Right ventricle myocardium inferior (tissue), 1 donor: ENCODE measurements at regions of chr22 and their contacts with region 1.

Region 1: GRCh38 chr22:40487663-40488249 is 117.4 kb downstream of the SGSM3 start:
- DNase-seq: no peak
- ATAC-seq: no peak

Region 2: DNA sequence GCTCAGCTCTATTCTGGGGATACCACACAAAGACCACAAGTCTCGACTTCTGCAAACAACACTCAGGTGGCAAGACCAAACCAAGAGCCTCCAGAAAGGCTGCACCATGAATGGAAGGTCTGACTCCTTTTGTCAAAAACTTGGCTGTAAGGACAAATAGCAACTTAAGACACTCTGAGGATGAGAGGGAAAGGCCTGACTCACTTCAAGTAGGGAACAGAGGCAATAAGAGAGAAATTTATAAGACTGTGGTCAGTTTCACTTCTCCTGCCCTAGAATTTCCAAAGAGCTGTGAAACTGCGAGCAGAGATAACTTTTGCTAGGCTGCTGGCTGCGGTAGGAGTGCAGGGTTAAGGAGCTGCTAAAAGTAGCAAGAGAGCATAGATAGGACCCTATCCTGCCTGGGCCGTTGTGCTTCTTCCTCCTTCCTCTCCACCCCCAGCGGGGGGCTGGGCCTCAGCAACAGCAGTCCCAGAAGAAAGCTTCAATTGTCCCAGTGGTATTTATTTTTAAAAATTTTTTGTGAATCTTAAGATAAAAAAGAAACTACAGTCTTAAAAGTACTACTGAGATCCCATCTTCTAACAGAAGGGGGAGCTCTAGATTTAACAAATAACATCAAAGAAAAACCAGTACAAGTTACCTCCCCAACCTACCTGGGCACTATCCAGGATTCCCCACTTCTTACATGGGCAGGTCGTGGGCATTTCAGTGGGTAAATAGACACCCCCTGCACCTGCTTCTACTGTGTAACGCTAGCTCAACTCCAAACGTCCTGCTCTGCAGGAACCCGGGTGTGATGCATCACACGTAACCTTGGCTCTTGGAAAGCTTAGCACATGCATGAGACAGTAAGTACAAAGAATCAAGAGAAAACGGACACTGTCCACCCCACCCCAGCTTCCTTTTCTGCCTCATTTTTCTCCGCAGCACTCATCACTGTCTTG is 51.0 kb before region 1 on chr22:
- intact Hi-C with region 1: loop called (anchors 10 kb)
- DNase-seq: no peak
- ATAC-seq: peak; percentile 73

Region 3: DNA sequence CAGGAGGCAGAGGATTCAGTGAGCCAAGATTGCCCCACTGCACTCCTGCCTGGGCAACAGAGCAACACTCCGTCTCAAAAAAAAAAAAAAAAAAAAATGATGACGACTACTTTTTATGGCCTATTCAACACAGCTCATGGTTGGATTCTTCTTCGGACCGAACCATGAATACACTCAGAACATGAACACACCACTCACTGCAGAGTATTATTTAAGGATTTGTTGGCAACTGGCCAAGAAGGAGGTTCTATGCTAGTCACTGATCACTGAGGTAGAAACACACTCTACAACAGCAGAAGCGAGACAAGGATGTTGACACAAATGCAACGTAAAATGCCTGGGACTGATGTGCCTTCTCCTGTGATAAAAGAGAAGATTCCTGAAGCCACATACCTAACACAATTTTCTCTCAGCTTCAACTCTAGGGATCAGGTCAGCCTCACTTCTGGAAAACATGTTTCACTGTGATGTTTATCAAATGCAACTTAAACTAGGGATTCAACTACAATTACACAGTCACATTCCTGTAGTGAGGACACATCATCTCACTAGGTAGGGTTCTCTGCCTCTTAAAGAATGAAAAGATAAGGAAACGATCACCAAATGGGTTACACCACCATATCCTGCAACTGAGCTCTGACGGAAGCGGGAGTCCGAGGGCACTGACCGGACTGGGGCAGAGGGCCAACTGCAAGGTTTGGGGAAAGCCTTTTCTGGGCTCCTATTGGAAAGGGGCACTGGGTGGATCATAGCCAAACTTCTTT is 34.8 kb before region 1 on chr22:
- intact Hi-C with region 1: loop called (anchors 2 kb)
- DNase-seq: no peak
- ATAC-seq: no peak

Region 4: GRCh38 chr22:40525249-40525884 is 37.6 kb after region 1 on chr22:
- intact Hi-C with region 1: no loop called
- DNase-seq: peak; percentile 69
- ATAC-seq: no peak

Region 5: DNA sequence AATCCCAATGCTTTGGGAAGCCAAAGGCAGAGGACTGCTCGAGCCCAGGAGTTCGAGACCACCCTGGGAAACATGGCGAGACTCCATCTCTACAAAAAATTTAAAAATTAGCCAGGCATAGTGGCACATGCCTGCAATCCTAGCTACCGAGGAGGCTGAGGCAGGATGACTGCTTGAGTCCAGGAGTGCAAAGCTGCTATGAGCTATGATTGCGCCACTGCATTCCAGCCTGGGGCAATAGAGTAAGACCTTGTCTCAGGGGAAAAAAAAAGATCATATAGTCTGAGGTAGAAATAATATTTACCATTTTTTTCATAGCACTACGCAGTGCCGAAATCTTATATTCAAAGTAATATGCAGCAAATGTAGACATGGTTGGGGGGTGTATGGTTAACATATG is 101.0 kb after region 1 on chr22:
- intact Hi-C with region 1: no loop called
- DNase-seq: no peak
- ATAC-seq: no peak